HCT116 (cell line): ENCODE measurements at regions of chr9 and their contacts with region 1.

Region 1: DNA sequence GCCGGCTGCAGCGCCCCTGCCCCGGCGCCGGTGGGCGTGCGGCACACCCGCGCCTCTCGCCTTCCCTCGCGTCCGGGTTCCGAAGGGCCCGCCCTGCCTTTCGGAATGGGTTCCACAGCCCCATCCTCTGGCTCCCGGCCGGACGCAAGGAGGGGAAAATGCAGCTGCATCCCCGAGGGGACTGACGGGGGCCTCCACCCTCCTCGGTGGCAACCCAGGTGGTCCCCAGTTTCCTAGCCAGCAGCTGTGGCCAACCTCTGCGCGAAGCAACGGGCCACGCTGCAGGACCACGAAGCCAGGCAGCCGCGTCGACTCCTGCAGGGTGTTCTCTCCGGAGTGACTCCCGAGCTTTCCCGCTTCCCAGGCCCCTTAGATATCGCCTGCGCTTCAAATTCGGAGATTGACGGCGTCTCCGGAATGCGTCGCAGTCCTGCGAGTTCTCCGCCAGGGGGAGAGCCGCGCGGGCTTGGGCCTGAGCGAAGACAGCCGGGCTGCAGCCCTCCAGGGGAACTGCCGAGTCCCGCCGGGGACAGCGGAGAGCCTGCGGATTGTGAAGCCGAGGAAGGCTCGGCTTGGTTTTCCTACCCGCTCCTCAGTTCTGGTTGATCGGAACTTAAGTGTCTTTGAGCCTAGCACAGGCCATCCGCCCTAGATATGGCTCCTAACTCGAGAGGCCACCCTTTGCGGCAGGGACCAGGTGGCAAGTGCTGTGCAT is 582 bp upstream of the APBA1 start:
- DNase-seq: peak; percentile 77
- ATAC-seq: peak; percentile 93
- H3K4me3 ChIP-seq: peak overlapping the region; percentile 47 to 55
- H3K27ac ChIP-seq: peak overlapping the region; percentile 1; the same call in 1 of the 2 replicates
- H3K4me1 ChIP-seq: peaks cover 3 to 14% of the 10 kb centered on the region in 2 experiments; a peak in 3 of 4 replicates
- H3K27me3 ChIP-seq: peaks cover 6% of the 10 kb centered on the region; the same call in 1 of the 2 replicates
- CTCF ChIP-seq: peak; percentile 67 to 85 (median 76)
- POLR2A ChIP-seq: no peak
- RAD21 ChIP-seq: peak; percentile 63

Region 2: GRCh38 chr9:69391946-69392345 is 280.8 kb before region 1 on chr9:
- CTCF ChIA-PET with region 1: no interaction called
- POLR2A ChIA-PET with region 1: no interaction called
- RAD21 ChIA-PET with region 1: no interaction called
- intact Hi-C with region 1: no loop called
- DNase-seq: no peak
- ATAC-seq: no peak
- H3K4me3 ChIP-seq: no peak overlapping the region
- H3K27ac ChIP-seq: no peak overlapping the region
- H3K4me1 ChIP-seq: no peaks in the 10 kb centered on the region
- H3K27me3 ChIP-seq: peaks cover 3% of the 10 kb centered on the region; the same call in 1 of the 2 replicates
- CTCF ChIP-seq: no peak
- POLR2A ChIP-seq: no peak
- RAD21 ChIP-seq: no peak

Region 3: DNA sequence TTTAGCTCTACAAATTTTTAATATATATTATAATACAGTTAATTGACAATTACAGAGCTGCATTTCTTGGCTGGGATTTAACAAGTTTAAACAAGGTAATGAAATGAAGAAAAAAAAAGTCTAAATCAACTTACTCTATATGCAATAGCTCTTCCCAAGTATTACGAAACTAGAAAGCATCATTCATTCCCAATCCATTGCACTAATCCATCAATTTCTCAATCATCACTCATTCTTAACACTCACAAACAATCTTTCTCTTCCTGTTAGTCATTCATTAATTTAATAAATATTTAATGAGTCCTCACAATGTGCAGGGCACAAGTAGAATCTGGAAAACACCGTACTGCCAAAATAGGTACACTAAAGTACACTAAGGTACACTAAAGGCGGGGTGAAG is 42.3 kb after region 1 on chr9:
- CTCF ChIA-PET with region 1: no interaction called
- POLR2A ChIA-PET with region 1: no interaction called
- RAD21 ChIA-PET with region 1: no interaction called
- intact Hi-C with region 1: no loop called
- DNase-seq: no peak
- ATAC-seq: no peak
- H3K4me3 ChIP-seq: no peak overlapping the region
- H3K27ac ChIP-seq: no peak overlapping the region
- H3K4me1 ChIP-seq: no peaks in the 10 kb centered on the region
- H3K27me3 ChIP-seq: no peaks in the 10 kb centered on the region
- CTCF ChIP-seq: no peak
- POLR2A ChIP-seq: no peak
- RAD21 ChIP-seq: no peak

Region 4: GRCh38 chr9:69759421-69760277 is 86.9 kb after region 1 on chr9 and contains the start of gene PTAR1:
- CTCF ChIA-PET with region 1: no interaction called
- POLR2A ChIA-PET with region 1: no interaction called
- RAD21 ChIA-PET with region 1: no interaction called
- intact Hi-C with region 1: loop called (anchors 5 kb)
- DNase-seq: peak; percentile 68
- ATAC-seq: peak; percentile 91
- H3K4me3 ChIP-seq: peak within 1 kb of the TSS; percentile 54 to 96
- H3K27ac ChIP-seq: peak within 1 kb of the TSS; percentile 78
- H3K4me1 ChIP-seq: peaks cover 6 to 9% of the 10 kb centered on the region in 2 experiments; a peak in 3 of 4 replicates
- H3K27me3 ChIP-seq: no peaks in the 10 kb centered on the region
- CTCF ChIP-seq: no peak
- POLR2A ChIP-seq: peak; percentile 52
- RAD21 ChIP-seq: no peak
- total RNA-seq, gene PTAR1: 32.2 TPM

Region 5: GRCh38 chr9:69919461-69920061 is 246.8 kb after region 1 on chr9:
- CTCF ChIA-PET with region 1: interaction called, 12 read pairs
- POLR2A ChIA-PET with region 1: no interaction called
- RAD21 ChIA-PET with region 1: interaction called in 1 of 2 experiments, 5 read pairs
- intact Hi-C with region 1: loop called (anchors 5 kb)
- DNase-seq: peak; percentile 29
- ATAC-seq: peak; percentile 89
- H3K4me3 ChIP-seq: no peak overlapping the region
- H3K27ac ChIP-seq: no peak overlapping the region
- H3K4me1 ChIP-seq: no peaks in the 10 kb centered on the region
- H3K27me3 ChIP-seq: peaks cover 20% of the 10 kb centered on the region
- CTCF ChIP-seq: peak; percentile 60 to 72 (median 63); a peak in 5 of 6 replicates
- POLR2A ChIP-seq: no peak
- RAD21 ChIP-seq: peak; percentile 73